Psoas muscle (tissue), 8 donors: ENCODE measurements at regions of chr2 and their contacts with region 1.

Region 1: DNA sequence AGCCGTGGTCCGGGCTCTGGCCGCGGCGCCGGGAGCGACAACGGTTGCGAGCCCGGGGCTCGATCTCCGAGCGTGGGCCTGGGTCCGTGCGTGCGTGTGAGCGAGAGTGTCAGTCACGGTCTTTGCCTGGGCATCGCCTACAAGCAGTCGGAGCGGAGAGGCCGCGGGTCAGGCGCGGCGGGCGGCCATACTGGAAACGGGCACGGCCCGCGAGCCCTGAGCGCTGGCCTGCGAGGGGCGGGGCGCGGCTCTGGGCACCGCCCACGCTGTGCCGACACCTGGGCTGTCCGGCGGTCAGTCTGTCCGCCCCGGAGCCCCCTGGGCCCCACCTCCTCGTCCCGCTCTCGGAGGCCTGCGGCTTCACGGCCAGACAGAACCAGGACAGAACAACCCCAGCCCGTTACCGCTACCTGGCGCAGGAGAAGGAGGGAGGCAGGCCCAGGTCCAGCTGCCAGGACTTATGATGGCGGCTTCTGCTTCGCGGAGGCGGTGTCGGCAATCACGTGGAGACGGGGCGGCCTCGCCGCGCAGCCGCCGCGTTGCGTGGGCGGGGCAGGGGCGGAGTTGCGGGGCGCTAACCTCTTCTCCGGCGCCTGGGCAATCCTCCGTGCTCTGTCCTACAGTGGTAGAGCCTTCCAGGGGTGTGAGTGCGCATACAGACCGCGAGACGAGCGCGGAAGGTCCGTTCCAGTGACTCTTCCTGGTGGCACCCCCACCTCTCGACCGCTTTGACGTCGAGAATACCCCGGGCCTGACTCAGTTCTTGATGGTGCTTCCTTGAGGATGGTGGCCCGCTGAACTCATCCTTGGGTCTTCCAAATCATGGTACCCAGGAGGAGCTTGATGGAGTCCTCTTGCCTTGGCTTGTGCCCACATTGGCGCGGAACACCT is at the start of gene TMEM131:
- DNase-seq: peak; percentile 96 to 98
- ATAC-seq: peak; percentile 93 to 96 (median 94)
- H3K4me3 ChIP-seq: peak within 1 kb of the TSS; percentile 90
- H3K27ac ChIP-seq: peak within 1 kb of the TSS; percentile 99
- H3K4me1 ChIP-seq: peaks cover 33% of the 10 kb centered on the region
- H3K27me3 ChIP-seq: no peaks in the 10 kb centered on the region
- CTCF ChIP-seq: no peak
- total RNA-seq, gene TMEM131: 20.1 to 33.3 (median 27.0) TPM

Region 2: GRCh38 chr2:97806738-97807618 is 189.0 kb before region 1 on chr2:
- intact Hi-C with region 1: loop called (anchors 5 to 10 kb)
- DNase-seq: peak; percentile 84 to 92
- ATAC-seq: peak; percentile 94 to 99 (median 96)
- H3K4me3 ChIP-seq: no peak overlapping the region
- H3K27ac ChIP-seq: peak overlapping the region; percentile 58
- H3K4me1 ChIP-seq: peaks cover 12% of the 10 kb centered on the region
- H3K27me3 ChIP-seq: no peaks in the 10 kb centered on the region
- CTCF ChIP-seq: peak; percentile 95

Region 3: GRCh38 chr2:97870396-97870843 is 125.6 kb before region 1 on chr2:
- intact Hi-C with region 1: loop called in 1 of 2 experiments (anchors 2 kb)
- DNase-seq: no peak
- ATAC-seq: peak; percentile 84 to 91 (median 86)
- H3K4me3 ChIP-seq: peak overlapping the region; percentile 33
- H3K27ac ChIP-seq: peak overlapping the region; percentile 93
- H3K4me1 ChIP-seq: peaks cover 43% of the 10 kb centered on the region
- H3K27me3 ChIP-seq: no peaks in the 10 kb centered on the region
- CTCF ChIP-seq: no peak

Region 4: DNA sequence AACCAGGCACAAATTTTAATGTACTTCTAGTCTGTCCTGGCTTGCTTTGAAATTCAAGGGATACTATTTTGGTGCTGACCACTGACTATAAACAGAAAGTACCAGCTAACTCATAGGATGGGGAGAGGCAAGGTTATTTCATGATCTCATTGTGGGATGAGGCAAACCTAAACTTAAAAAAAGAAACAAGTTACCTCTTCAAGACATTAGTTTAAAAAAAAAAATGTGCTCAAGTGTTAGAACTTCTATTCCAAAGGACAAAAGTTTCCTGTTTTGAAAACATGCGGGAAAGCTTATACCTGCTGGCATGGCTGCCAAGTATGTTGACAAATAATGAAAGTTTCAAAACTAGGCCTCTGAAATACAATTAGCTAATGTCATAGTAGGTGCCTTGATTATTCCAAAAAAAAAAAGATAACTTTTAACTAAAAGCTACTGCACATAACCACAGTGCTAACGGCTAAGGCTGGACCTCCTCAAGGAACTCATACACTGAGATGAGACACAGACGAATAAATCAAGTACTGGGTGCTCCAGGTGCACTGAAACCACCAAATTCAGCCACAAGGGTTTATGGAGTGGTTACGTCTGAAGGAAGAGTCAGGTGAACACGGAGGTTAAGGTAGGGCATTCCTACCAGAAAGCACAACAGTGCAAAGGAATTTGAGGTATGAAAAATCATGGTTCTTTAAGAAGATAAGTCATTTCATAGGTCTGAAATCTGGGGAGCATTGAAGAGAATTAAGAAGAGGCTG is 38.4 kb before region 1 on chr2:
- intact Hi-C with region 1: loop called in 1 of 2 experiments (anchors 5 kb)
- DNase-seq: no peak
- ATAC-seq: peak; percentile 75 to 90 (median 84)
- H3K4me3 ChIP-seq: no peak overlapping the region
- H3K27ac ChIP-seq: peak overlapping the region; percentile 76
- H3K4me1 ChIP-seq: peaks cover 56% of the 10 kb centered on the region
- H3K27me3 ChIP-seq: no peaks in the 10 kb centered on the region
- CTCF ChIP-seq: no peak

Region 5: GRCh38 chr2:98163611-98164010 is 167.6 kb after region 1 on chr2:
- intact Hi-C with region 1: loop called (anchors 2 to 5 kb)
- DNase-seq: no peak
- ATAC-seq: no peak
- H3K4me3 ChIP-seq: no peak overlapping the region
- H3K27ac ChIP-seq: peak overlapping the region; percentile 94
- H3K4me1 ChIP-seq: peaks cover 64% of the 10 kb centered on the region
- H3K27me3 ChIP-seq: no peaks in the 10 kb centered on the region
- CTCF ChIP-seq: no peak